Transverse colon (tissue), 4 donors: ENCODE measurements at regions of chr2 and their contacts with region 1.

Region 1: GRCh38 chr2:180077295-180077906 is 70.3 kb upstream of the CWC22 start:
- DNase-seq: no peak
- H3K4me3 ChIP-seq: no peak overlapping the region
- H3K27ac ChIP-seq: no peak overlapping the region
- H3K4me1 ChIP-seq: peaks cover 0 to 11% (median 4%) of the 10 kb centered on the region in 4 donors
- H3K27me3 ChIP-seq: no peaks in the 10 kb centered on the region
- CTCF ChIP-seq: peak; percentile 45 to 65 (median 61)
- EP300 ChIP-seq: no peak
- POLR2A ChIP-seq: no peak

Region 2: DNA sequence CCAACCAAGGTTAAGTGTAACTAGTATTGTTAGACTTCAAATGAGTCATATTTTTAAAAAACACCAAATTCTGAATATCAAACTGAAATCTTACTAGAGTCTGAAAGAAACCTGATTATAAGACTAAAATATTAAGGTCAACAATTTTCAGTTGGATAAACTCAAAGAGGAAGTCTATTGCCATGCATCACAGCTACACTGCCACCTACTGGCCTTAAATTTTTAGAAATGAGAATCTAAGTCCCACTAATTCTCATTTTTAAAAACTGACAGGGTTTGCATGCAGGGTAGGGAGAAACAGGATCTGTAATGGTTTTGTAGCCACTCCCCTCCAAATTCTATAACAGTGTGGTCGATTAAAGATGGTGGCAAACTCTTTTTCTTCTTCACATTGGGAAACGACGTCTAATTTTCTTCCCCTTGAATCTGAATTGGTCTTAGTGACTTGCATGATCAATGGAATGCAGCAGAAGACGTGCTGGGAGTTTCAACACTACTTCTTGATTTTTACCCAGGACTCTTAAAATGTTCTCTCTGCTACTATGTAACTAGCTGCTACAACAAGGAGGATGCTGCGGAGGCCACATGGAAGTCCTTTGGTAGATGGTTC is 636.7 kb before region 1 on chr2:
- in situ Hi-C with region 1: loop called in 1 of 4 experiments (anchors 25 kb)
- intact Hi-C with region 1: no loop called
- DNase-seq: no peak
- H3K4me3 ChIP-seq: no peak overlapping the region
- H3K27ac ChIP-seq: no peak overlapping the region
- H3K4me1 ChIP-seq: no peaks in the 10 kb centered on the region
- H3K27me3 ChIP-seq: no peaks in the 10 kb centered on the region
- CTCF ChIP-seq: peak; percentile 39 to 57 (median 55)
- EP300 ChIP-seq: no peak
- POLR2A ChIP-seq: no peak

Region 3: DNA sequence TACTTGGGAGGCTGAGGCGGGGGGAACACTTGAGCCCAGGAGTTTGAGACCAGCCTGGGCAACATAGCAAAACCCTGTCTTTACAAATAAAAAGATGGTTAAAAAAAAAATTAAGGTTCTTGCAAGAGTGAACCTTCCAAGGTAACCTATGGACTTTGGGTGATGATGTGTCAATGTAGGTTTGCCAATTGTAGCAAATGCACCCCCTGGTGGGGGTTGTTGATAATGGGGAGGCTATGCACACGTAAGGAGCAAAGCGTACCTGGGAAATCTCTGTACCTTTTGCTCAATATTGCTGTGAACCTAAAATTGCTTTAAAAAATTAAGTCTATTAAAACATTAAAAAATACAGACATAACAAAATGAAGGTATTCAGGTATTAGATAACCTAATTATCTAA is 140.7 kb before region 1 on chr2:
- in situ Hi-C with region 1: no loop called
- intact Hi-C with region 1: no loop called
- DNase-seq: peak; percentile 29
- H3K4me3 ChIP-seq: no peak overlapping the region
- H3K27ac ChIP-seq: no peak overlapping the region
- H3K4me1 ChIP-seq: peaks cover 0 to 9% (median 2%) of the 10 kb centered on the region in 4 donors
- H3K27me3 ChIP-seq: no peaks in the 10 kb centered on the region
- CTCF ChIP-seq: peak in 3 of 5 experiments; percentile 41 to 49 (median 41)
- EP300 ChIP-seq: no peak
- POLR2A ChIP-seq: no peak

Region 4: GRCh38 chr2:179991344-179991743 is 86.1 kb before region 1 on chr2:
- in situ Hi-C with region 1: no loop called
- intact Hi-C with region 1: no loop called
- DNase-seq: no peak
- H3K4me3 ChIP-seq: no peak overlapping the region
- H3K27ac ChIP-seq: no peak overlapping the region
- H3K4me1 ChIP-seq: peaks cover 0 to 7% (median 0%) of the 10 kb centered on the region in 4 donors
- H3K27me3 ChIP-seq: no peaks in the 10 kb centered on the region
- CTCF ChIP-seq: no peak
- EP300 ChIP-seq: no peak
- POLR2A ChIP-seq: no peak